H1 (cell line): ENCODE measurements at regions of chr6 and their contacts with region 1.

Region 1: DNA sequence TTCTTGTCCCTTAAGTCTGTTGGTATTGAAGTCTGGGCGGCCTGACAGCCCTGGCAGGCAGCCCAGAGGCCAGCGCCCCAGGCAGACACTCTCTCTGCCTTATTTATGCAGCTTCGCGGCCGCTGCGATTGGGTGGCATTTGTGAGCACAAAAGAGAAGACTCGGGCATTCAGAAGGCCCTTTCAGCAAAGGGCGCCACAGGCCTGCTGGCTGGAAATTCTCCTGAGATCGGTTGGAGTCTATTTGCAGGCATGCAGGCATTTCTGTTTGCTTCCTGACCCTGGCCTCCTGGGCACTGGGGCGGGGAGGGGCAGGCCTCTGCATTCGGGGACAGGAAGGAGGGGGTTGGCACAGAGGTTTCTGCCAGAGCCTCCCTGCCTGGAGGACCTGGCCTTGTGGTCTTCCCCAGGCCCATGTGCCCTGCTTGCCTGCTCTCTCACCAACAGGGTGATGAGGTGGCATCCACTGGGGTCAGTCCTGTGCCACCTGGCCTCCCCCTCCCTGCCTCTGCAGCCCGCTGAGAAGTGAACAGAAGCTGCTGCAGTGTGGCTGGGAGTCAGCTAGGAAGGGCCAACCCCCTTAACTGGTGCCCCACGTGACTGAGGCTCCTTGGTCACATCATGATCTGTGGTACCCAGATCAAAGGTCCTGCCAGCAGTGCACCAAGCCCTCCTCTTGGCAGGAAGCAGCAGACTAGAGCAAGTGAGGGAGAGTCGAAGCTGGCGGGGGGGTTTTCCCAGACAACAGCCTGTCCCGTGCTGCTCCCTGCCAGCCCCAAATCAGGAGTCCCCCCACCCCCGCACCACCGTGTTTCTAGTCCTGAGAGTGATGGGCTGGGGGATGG is 16.6 kb upstream of the CCDC167 start:
- DNase-seq: no peak
- H3K4me3 ChIP-seq: no peak overlapping the region
- H3K27ac ChIP-seq: no peak overlapping the region
- H3K4me1 ChIP-seq: peaks cover 2 to 47% (median 39%) of the 10 kb centered on the region in 4 experiments
- H3K27me3 ChIP-seq: peaks cover 0 to 24% (median 16%) of the 10 kb centered on the region in 4 experiments; a peak in 6 of 7 replicates
- CTCF ChIP-seq: no peak
- EP300 ChIP-seq: no peak
- POLR2A ChIP-seq: no peak
- RAD21 ChIP-seq: no peak; a peak in 1 of 4 replicates

Region 2: GRCh38 chr6:37499433-37500293 is 16.6 kb before region 1 on chr6 and contains the start of gene CCDC167:
- CTCF ChIA-PET with region 1: interaction called, 14 read pairs
- POLR2A ChIA-PET with region 1: interaction called, 9 read pairs
- DNase-seq: peak; percentile 98 to 99
- H3K4me3 ChIP-seq: peak within 1 kb of the TSS; percentile 56 to 69 (median 63)
- H3K27ac ChIP-seq: peak within 1 kb of the TSS; percentile 92
- H3K4me1 ChIP-seq: peaks cover 0 to 5% (median 3%) of the 10 kb centered on the region in 4 experiments; a peak in 4 of 7 replicates
- H3K27me3 ChIP-seq: peaks cover 0 to 8% (median 5%) of the 10 kb centered on the region in 4 experiments; a peak in 4 of 7 replicates
- CTCF ChIP-seq: no peak
- EP300 ChIP-seq: peak in 1 of 2 experiments; percentile 41; a peak in 1 of 3 replicates
- POLR2A ChIP-seq: peak; percentile 53 to 60; a peak in 2 of 3 replicates
- RAD21 ChIP-seq: no peak
- total RNA-seq, gene CCDC167: 11.0 TPM in 2 replicates